ENCODE measurements at regions of chr10 and their contacts with region 1.

Region 1: DNA sequence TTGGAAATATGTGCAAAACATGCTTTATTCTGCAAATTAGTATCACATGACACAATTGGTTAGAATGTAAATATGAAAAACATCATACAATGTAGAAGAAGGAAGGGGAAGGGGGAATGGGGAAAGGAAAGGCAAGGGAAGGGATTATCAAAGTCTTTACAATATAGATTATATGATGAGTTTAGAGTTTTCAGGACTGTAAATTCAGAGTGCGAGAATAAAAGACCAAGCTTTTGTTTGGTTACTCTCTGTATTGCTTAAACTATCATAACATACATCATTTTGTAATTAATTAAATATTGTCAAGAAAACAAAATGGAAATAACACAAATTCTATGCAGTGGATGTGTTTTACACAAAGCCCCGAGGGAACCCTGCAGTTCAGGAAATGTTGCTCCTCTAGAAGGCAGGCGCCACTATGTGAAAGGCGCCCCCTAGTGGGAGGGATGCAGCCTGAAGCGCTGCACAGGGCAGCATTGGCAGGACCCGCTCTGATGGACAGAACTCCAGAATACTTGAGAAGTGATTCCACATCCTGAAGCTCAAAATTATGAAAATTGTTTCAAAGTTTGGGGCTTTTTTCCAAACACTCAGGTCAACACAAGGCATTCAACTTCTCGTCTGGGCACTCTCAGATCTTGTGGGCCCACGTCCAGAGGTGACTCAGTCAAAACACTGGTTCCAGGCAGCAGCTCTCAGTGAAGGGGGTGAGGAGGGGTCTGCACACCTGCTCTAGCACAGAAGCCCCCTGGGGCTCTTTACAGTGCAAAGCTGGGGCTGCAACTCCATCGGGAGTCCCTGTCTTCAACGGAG is 31.6 kb upstream of the TMEM254 start:
- DNase-seq: peak; percentile 41 to 83
- H3K4me3 ChIP-seq: no peak overlapping the region
- H3K27ac ChIP-seq: no peak overlapping the region
- H3K4me1 ChIP-seq: no peaks in the 10 kb centered on the region
- H3K27me3 ChIP-seq: no peaks in the 10 kb centered on the region
- CTCF ChIP-seq: peak; percentile 99

Region 2: GRCh38 chr10:79487296-79488194 is 559.3 kb before region 1 on chr10:
- CTCF ChIA-PET with region 1: no interaction called
- POLR2A ChIA-PET with region 1: no interaction called
- intact Hi-C with region 1: no loop called
- DNase-seq: peak in 1 of 2 experiments; percentile 57
- H3K4me3 ChIP-seq: no peak overlapping the region
- H3K27ac ChIP-seq: peak overlapping the region; percentile 11; the same call in 1 of the 2 replicates
- H3K4me1 ChIP-seq: peaks cover 15% of the 10 kb centered on the region
- H3K27me3 ChIP-seq: no peaks in the 10 kb centered on the region
- CTCF ChIP-seq: peak; percentile 70

Region 3: GRCh38 chr10:79542626-79543025 is 504.2 kb before region 1 on chr10:
- CTCF ChIA-PET with region 1: no interaction called
- POLR2A ChIA-PET with region 1: no interaction called
- intact Hi-C with region 1: loop called (anchors 5 kb)
- DNase-seq: no peak
- H3K4me3 ChIP-seq: no peak overlapping the region
- H3K27ac ChIP-seq: no peak overlapping the region
- H3K4me1 ChIP-seq: no peaks in the 10 kb centered on the region
- H3K27me3 ChIP-seq: peaks cover 25% of the 10 kb centered on the region
- CTCF ChIP-seq: no peak

Region 4: DNA sequence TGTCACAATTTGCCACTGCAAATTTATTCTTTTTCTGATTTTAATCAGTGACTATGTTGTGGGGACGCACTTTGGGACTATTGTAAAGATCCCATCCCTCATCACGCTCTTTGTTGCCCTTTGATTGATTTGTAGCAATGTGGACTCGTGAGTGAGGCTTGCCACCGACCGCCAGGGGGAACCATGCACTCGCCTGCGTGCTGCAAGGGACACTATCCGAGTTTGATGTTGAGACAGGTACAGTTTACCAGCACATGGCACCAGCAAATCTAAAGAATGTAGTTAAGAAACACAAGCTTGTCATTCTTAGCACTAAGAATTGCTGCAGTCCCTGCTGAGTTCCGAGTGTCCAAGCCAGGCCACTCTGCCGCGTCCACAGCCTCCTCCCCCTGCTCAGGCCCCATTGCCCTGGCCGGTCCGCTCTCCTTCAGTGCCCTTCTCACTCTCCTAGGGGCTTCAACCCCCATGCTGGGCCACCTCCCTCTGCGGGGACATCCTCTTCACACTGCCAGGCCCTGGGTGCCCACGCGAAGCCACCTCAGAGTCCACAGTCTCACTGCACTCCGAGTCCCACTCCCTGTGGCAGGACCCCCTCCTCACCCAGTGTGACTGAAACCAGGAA is 484.6 kb before region 1 on chr10:
- CTCF ChIA-PET with region 1: no interaction called
- POLR2A ChIA-PET with region 1: no interaction called
- intact Hi-C with region 1: loop called (anchors 5 kb)
- DNase-seq: peak; percentile 59 to 66
- H3K4me3 ChIP-seq: no peak overlapping the region
- H3K27ac ChIP-seq: no peak overlapping the region
- H3K4me1 ChIP-seq: peaks cover 8% of the 10 kb centered on the region
- H3K27me3 ChIP-seq: peaks cover 38% of the 10 kb centered on the region
- CTCF ChIP-seq: peak; percentile 92

Region 5: DNA sequence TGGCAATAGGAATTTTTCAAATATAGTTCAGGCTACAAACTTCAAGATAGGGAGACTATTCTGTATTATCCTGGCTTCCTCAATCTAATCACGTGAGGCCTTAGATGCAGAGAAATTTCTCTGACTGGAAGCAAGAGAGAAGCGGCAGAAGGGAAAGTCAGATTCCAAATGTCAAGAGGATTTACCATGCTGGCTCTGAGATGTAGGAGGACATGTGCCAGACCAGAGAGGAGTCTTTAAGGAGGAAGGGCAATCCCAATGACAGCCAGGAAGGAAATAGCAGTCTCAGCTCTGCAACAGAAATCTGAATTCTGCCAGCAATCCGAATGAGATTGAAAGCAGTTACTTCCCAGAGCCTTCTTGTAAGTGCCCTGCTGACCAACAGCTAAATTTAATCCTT is 162.8 kb before region 1 on chr10:
- CTCF ChIA-PET with region 1: no interaction called
- POLR2A ChIA-PET with region 1: interaction called, 11 read pairs
- intact Hi-C with region 1: no loop called
- DNase-seq: no peak
- H3K4me3 ChIP-seq: no peak overlapping the region
- H3K27ac ChIP-seq: no peak overlapping the region
- H3K4me1 ChIP-seq: no peaks in the 10 kb centered on the region
- H3K27me3 ChIP-seq: no peaks in the 10 kb centered on the region
- CTCF ChIP-seq: no peak

Region 6: DNA sequence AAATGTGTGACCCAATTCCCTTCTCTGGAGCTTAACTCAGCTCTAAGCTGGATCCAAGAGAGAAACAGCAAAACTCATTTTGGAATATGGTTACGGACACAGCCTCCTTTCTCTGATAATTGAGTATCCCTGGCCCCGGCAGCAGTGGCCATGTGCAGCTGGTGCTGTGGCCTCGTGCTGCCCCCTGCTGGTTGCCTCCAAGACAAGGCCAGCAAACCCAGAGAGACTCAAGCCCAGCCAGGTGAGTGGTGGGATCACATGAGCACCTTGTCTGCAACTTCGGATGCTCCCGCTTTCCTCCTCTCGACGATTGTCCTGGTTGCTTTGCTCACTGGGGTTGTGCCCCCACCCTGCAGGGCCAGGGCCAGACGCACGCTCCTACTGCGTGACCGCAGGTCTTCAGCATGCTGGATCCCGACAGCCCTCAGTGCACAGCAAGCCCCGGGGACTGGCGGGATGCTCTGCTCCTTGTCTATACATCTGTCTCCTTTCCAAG is 117.4 kb before region 1 on chr10:
- CTCF ChIA-PET with region 1: no interaction called
- POLR2A ChIA-PET with region 1: no interaction called
- intact Hi-C with region 1: loop called (anchors 5 kb)
- DNase-seq: peak in 1 of 2 experiments; percentile 66
- H3K4me3 ChIP-seq: no peak overlapping the region
- H3K27ac ChIP-seq: no peak overlapping the region
- H3K4me1 ChIP-seq: no peaks in the 10 kb centered on the region
- H3K27me3 ChIP-seq: peaks cover 8% of the 10 kb centered on the region; the same call in 1 of the 2 replicates
- CTCF ChIP-seq: peak; percentile 89

Region 7: DNA sequence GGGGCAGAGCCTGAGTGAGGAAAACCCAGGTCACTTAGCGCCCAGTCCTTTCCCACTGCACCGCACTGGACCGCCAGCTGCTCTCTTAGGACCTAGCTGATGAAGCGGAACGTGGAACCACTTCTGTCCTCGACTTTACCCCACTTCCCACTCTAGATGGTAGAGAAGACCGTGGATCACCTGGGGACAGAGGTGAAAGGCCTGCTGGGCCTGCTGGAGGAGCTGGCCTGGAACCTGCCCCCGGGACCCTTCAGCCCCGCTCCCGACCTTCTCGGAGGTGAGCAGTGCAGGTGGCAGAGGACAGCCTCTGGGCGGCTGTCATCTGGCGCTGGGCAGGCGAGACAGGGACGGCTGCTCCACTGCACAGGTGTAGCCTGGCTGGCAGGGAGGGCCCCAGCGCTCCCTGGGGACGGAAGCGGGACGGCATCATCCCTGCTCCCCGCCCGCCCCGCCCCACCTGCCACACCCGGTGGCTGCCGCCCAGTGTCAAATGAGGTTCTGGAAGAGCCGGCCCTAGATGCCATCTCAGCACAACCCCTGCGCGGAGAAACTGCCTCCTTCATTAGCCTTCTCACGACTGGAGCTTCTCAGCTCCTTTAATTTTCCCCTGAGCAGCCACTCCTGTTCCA is 97.3 kb after region 1 on chr10:
- CTCF ChIA-PET with region 1: interaction called, 10 read pairs
- POLR2A ChIA-PET with region 1: no interaction called
- intact Hi-C with region 1: loop called (anchors 5 kb)
- DNase-seq: peak; percentile 58 to 77
- H3K4me3 ChIP-seq: peak overlapping the region; percentile 48
- H3K27ac ChIP-seq: no peak overlapping the region
- H3K4me1 ChIP-seq: peaks cover 23% of the 10 kb centered on the region
- H3K27me3 ChIP-seq: no peaks in the 10 kb centered on the region
- CTCF ChIP-seq: no peak; the same call in 1 of the 2 replicates

Region 8: DNA sequence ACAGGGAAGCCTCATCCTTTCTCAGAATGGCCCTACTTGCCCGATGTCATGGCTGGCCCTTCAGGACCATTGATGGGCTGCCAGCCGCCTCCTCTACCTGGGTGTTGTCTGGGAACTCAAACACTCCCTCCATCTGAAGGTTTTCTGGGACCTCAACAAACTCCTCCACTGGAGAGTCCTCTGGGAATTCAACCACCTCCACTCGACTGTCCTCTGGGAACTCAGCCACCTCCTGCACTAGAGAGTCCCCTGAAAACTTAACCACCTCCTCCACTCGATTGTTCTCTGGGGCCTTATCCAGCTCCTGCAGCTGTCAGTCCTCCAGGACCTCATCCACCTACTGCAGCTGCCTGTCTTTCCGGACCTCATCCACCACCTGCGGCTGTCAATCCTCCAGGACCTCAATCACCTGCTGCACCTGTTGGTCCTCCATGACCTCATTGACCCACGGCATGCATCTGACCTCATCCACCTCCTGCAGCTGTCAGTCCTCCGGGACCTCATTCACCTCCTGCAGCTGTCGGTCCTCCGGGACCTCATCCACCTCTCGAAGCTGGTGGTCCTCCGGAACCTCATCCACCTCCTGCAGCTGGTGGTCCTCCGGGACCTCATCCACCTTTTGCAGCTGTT is 205.6 kb after region 1 on chr10:
- CTCF ChIA-PET with region 1: interaction called, 15 read pairs
- POLR2A ChIA-PET with region 1: no interaction called
- intact Hi-C with region 1: no loop called
- DNase-seq: no peak
- H3K4me3 ChIP-seq: no peak overlapping the region
- H3K27ac ChIP-seq: no peak overlapping the region
- H3K4me1 ChIP-seq: peaks cover 18% of the 10 kb centered on the region
- H3K27me3 ChIP-seq: peaks cover 6% of the 10 kb centered on the region; the same call in 1 of the 2 replicates
- CTCF ChIP-seq: no peak